Activated CD4-positive, alpha-beta memory T cell treated with anti-CD3 and anti-CD28 coated beads for 36 hours (primary cell): ENCODE measurements at regions of chr1 and their contacts with region 1.

Region 1: GRCh38 chr1:67332653-67333529 is 25.2 kb downstream of the IL12RB2 start:
- DNase-seq: no peak
- H3K4me3 Mint-ChIP-seq: peak overlapping the region; percentile 9
- H3K27ac Mint-ChIP-seq: peak overlapping the region; percentile 82
- H3K4me1 Mint-ChIP-seq: peaks cover 80% of the 10 kb centered on the region
- H3K27me3 Mint-ChIP-seq: no peaks in the 10 kb centered on the region

Region 2: GRCh38 chr1:66996018-66996682 is 336.7 kb before region 1 on chr1:
- CTCF ChIA-PET with region 1: no interaction called
- POLR2A ChIA-PET with region 1: no interaction called
- intact Hi-C with region 1: loop called (anchors 5 kb)
- DNase-seq: peak; percentile 78
- H3K4me3 Mint-ChIP-seq: no peak overlapping the region
- H3K27ac Mint-ChIP-seq: peak overlapping the region; percentile 25
- H3K4me1 Mint-ChIP-seq: peaks cover 16% of the 10 kb centered on the region
- H3K27me3 Mint-ChIP-seq: no peaks in the 10 kb centered on the region

Region 3: DNA sequence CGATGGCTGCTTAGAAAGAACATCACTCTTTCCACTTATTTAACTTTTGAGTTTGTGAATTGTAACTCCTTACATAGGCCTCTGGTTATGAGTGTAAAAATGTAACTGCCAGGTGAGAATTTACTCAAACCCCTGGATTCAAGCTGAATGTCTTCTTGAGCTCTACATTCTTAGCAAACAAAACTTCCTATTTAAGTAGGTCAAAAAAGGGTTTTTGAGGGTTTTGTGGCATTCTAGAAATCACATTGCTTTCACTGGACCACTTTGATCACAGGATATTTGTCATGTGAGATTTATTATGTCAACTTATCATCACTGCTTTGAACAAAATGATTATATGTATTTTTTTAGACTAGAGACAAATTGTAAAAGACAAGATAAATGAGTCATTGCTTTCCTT is 160.9 kb before region 1 on chr1:
- CTCF ChIA-PET with region 1: no interaction called
- POLR2A ChIA-PET with region 1: interaction called, 18 read pairs
- intact Hi-C with region 1: loop called (anchors 1 kb)
- DNase-seq: no peak
- H3K4me3 Mint-ChIP-seq: peak overlapping the region; percentile 74
- H3K27ac Mint-ChIP-seq: peak overlapping the region; percentile 99
- H3K4me1 Mint-ChIP-seq: peaks cover 72% of the 10 kb centered on the region
- H3K27me3 Mint-ChIP-seq: peaks cover 5% of the 10 kb centered on the region

Region 4: GRCh38 chr1:67285780-67286488 is 47.0 kb before region 1 on chr1:
- CTCF ChIA-PET with region 1: no interaction called
- POLR2A ChIA-PET with region 1: no interaction called
- intact Hi-C with region 1: loop called (anchors 1 kb)
- DNase-seq: no peak
- H3K4me3 Mint-ChIP-seq: no peak overlapping the region
- H3K27ac Mint-ChIP-seq: peak overlapping the region; percentile 41
- H3K4me1 Mint-ChIP-seq: peaks cover 26% of the 10 kb centered on the region
- H3K27me3 Mint-ChIP-seq: peaks cover 2% of the 10 kb centered on the region

Region 5: DNA sequence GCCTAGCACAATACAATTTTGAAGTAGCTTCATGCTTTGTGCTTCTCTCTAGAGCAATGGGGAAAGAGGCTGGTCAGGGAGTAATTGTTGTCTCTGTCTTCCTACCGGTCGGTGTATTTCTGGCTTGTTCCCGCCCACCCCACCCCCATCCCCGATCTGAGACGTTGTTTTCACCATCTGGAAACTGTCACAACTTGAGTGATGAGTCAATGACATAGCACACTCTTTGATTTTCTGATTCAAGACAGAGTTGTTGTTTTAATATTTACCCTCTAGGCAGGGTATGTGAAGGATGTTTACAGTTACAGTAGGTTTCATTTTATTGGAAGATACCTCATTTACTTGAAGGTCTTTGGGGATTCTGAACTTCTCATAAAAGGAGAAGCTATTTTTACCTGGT is 18.2 kb before region 1 on chr1:
- CTCF ChIA-PET with region 1: interaction called, 4 read pairs
- POLR2A ChIA-PET with region 1: interaction called, 23 read pairs
- intact Hi-C with region 1: loop called (anchors 1 kb)
- DNase-seq: peak; percentile 53
- H3K4me3 Mint-ChIP-seq: peak overlapping the region; percentile 56
- H3K27ac Mint-ChIP-seq: peak overlapping the region; percentile 96
- H3K4me1 Mint-ChIP-seq: peaks cover 48% of the 10 kb centered on the region
- H3K27me3 Mint-ChIP-seq: no peaks in the 10 kb centered on the region

Region 6: GRCh38 chr1:67404212-67404620 is 71.3 kb after region 1 on chr1:
- CTCF ChIA-PET with region 1: no interaction called
- POLR2A ChIA-PET with region 1: interaction called, 3 read pairs
- intact Hi-C with region 1: loop called (anchors 1 kb)
- DNase-seq: no peak
- H3K4me3 Mint-ChIP-seq: no peak overlapping the region
- H3K27ac Mint-ChIP-seq: no peak overlapping the region
- H3K4me1 Mint-ChIP-seq: peaks cover 14% of the 10 kb centered on the region
- H3K27me3 Mint-ChIP-seq: no peaks in the 10 kb centered on the region